ENCODE measurements at regions of chr16 and their contacts with region 1.

Region 1: DNA sequence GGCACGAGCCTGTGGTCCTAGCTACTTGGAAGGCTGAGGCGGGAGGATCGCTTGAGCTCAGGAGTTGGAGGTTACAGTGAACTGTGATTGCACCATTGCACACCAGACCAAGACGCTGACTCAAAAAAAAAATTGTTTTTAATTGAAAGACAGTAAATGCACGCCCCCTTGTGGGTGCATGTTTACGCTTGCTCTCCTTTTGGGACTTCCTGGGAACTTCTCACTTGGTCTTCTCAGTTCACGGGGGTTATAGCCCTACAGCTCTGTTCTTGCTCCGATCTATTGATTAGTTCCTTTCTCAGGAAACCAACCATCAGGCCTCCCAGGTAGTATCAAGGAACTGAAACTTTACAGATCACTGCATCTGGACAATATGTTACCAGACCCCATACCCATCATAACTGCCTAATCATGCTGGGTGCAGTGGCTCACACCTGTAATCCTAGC is 14.2 kb upstream of the RIPOR1 start:
- DNase-seq: peak; percentile 74 to 93
- ATAC-seq: peak; percentile 89 to 97 (median 92)
- H3K4me3 ChIP-seq: no peak overlapping the region
- H3K4me3 Mint-ChIP-seq: no peak overlapping the region
- H3K27ac ChIP-seq: no peak overlapping the region
- H3K27ac Mint-ChIP-seq: peak overlapping the region; percentile 57 to 82
- H3K4me1 ChIP-seq: peaks cover 35% of the 10 kb centered on the region
- H3K4me1 Mint-ChIP-seq: peaks cover 15 to 28% of the 10 kb centered on the region in 2 donors
- H3K27me3 ChIP-seq: no peaks in the 10 kb centered on the region
- H3K27me3 Mint-ChIP-seq: no peaks in the 10 kb centered on the region
- CTCF ChIP-seq: peak; percentile 74

Region 2: GRCh38 chr16:67504041-67505021 is 10.1 kb before region 1 on chr16:
- intact Hi-C with region 1: loop called (anchors 1 kb)
- DNase-seq: peak; percentile 45 to 67
- ATAC-seq: peak; percentile 91 to 95 (median 92)
- H3K4me3 ChIP-seq: no peak overlapping the region
- H3K4me3 Mint-ChIP-seq: peak overlapping the region; percentile 62
- H3K27ac ChIP-seq: peak overlapping the region; percentile 95
- H3K27ac Mint-ChIP-seq: peak overlapping the region; percentile 84 to 94
- H3K4me1 ChIP-seq: peaks cover 58% of the 10 kb centered on the region
- H3K4me1 Mint-ChIP-seq: peaks cover 45 to 68% of the 10 kb centered on the region in 2 donors
- H3K27me3 ChIP-seq: no peaks in the 10 kb centered on the region
- H3K27me3 Mint-ChIP-seq: no peaks in the 10 kb centered on the region
- CTCF ChIP-seq: no peak

Region 3: GRCh38 chr16:67632415-67633172 is 118.2 kb after region 1 on chr16:
- intact Hi-C with region 1: no loop called
- DNase-seq: no peak
- ATAC-seq: no peak
- H3K4me3 ChIP-seq: no peak overlapping the region
- H3K4me3 Mint-ChIP-seq: no peak overlapping the region
- H3K27ac ChIP-seq: no peak overlapping the region
- H3K27ac Mint-ChIP-seq: peak overlapping the region in 1 of 2 donors; percentile 37
- H3K4me1 ChIP-seq: no peaks in the 10 kb centered on the region
- H3K4me1 Mint-ChIP-seq: peaks cover 4 to 6% of the 10 kb centered on the region in 2 donors
- H3K27me3 ChIP-seq: no peaks in the 10 kb centered on the region
- H3K27me3 Mint-ChIP-seq: no peaks in the 10 kb centered on the region
- CTCF ChIP-seq: no peak